K562 (cell line): ENCODE measurements at regions of chr22 and their contacts with region 1.

Region 1: GRCh38 chr22:19844377-19845053 is 10.2 kb downstream of the GNB1L start:
- DNase-seq: peak in 1 of 4 experiments; percentile 28
- ATAC-seq: no peak
- H3K4me3 ChIP-seq: no peak overlapping the region
- H3K27ac ChIP-seq: no peak overlapping the region
- H3K4me1 ChIP-seq: peaks cover 0 to 50% of the 10 kb centered on the region in 2 experiments; a peak in 2 of 5 replicates
- H3K27me3 ChIP-seq: no peaks in the 10 kb centered on the region
- CTCF ChIP-seq: no peak
- EP300 ChIP-seq: no peak
- POLR2A ChIP-seq: no peak
- RAD21 ChIP-seq: no peak

Region 2: DNA sequence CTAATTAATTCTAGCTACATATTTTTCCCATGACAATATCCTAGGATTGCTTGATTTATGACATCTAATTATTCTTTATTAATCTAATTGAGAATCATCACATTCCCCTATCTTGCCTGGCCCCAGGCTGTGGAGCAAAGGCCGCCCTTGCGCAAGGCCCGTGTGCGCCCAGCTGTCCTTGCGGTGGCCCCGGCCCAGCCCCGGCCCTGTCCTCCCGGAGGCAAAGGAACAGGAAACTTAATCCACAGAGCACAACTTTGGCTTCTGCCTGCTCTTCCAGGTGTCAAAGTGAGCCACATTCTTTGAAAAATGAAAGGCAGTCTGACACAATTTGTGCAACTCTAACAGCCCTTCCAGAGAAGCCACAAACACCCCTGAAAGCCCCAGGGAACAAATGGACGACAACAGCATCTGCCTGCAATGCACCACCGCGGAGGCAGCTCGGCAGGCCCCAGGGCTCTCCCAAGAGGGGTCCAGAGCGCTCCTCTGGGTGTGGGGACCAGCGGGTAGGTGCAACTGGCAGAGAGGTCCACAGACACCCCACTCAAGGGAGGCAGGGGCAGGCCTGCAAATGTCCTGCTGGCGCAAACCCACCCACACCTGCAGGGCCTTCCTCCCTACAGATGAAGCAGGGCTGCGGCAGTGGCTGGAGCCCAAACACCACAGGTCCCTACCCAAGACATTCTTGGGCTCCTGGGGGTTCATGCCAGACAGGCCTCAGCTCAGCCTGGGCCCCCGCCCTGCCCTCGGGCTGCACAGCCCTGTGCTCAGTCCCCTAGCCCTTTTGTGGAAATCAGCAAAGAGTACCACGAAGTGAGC is 20.1 kb before region 1 on chr22:
- CTCF ChIA-PET with region 1: no interaction called
- POLR2A ChIA-PET with region 1: interaction called, 247 read pairs
- in situ Hi-C with region 1: no loop called
- intact Hi-C with region 1: no loop called
- DNase-seq: no peak
- ATAC-seq: no peak
- H3K4me3 ChIP-seq: no peak overlapping the region
- H3K27ac ChIP-seq: no peak overlapping the region
- H3K4me1 ChIP-seq: peaks cover 13 to 52% of the 10 kb centered on the region in 2 experiments; a peak in 4 of 5 replicates
- H3K27me3 ChIP-seq: no peaks in the 10 kb centered on the region
- CTCF ChIP-seq: no peak
- EP300 ChIP-seq: no peak
- POLR2A ChIP-seq: no peak
- RAD21 ChIP-seq: no peak

Region 3: GRCh38 chr22:19868773-19869471 is 24.4 kb after region 1 on chr22:
- CTCF ChIA-PET with region 1: no interaction called
- POLR2A ChIA-PET with region 1: interaction called, 51 read pairs
- in situ Hi-C with region 1: no loop called
- intact Hi-C with region 1: no loop called
- DNase-seq: no peak
- ATAC-seq: peak; percentile 2; the same call in 1 of the 3 replicates
- H3K4me3 ChIP-seq: no peak overlapping the region
- H3K27ac ChIP-seq: no peak overlapping the region
- H3K4me1 ChIP-seq: peaks cover 8 to 53% of the 10 kb centered on the region in 2 experiments; a peak in 4 of 5 replicates
- H3K27me3 ChIP-seq: peaks cover 2 to 30% of the 10 kb centered on the region in 2 experiments; a peak in 3 of 5 replicates
- CTCF ChIP-seq: no peak
- EP300 ChIP-seq: no peak
- POLR2A ChIP-seq: no peak
- RAD21 ChIP-seq: no peak

Region 4: GRCh38 chr22:20130739-20131596 is 286.5 kb after region 1 on chr22:
- CTCF ChIA-PET with region 1: no interaction called
- POLR2A ChIA-PET with region 1: no interaction called
- in situ Hi-C with region 1: no loop called
- intact Hi-C with region 1: no loop called
- DNase-seq: peak; percentile 95 to 100 (median 98)
- ATAC-seq: peak; percentile 79
- H3K4me3 ChIP-seq: peak overlapping the region; percentile 62
- H3K27ac ChIP-seq: peak overlapping the region; percentile 20; the same call in 2 of the 3 replicates
- H3K4me1 ChIP-seq: peaks cover 11 to 79% of the 10 kb centered on the region in 2 experiments
- H3K27me3 ChIP-seq: no peaks in the 10 kb centered on the region
- CTCF ChIP-seq: no peak
- EP300 ChIP-seq: no peak
- POLR2A ChIP-seq: no peak
- RAD21 ChIP-seq: no peak

Region 5: DNA sequence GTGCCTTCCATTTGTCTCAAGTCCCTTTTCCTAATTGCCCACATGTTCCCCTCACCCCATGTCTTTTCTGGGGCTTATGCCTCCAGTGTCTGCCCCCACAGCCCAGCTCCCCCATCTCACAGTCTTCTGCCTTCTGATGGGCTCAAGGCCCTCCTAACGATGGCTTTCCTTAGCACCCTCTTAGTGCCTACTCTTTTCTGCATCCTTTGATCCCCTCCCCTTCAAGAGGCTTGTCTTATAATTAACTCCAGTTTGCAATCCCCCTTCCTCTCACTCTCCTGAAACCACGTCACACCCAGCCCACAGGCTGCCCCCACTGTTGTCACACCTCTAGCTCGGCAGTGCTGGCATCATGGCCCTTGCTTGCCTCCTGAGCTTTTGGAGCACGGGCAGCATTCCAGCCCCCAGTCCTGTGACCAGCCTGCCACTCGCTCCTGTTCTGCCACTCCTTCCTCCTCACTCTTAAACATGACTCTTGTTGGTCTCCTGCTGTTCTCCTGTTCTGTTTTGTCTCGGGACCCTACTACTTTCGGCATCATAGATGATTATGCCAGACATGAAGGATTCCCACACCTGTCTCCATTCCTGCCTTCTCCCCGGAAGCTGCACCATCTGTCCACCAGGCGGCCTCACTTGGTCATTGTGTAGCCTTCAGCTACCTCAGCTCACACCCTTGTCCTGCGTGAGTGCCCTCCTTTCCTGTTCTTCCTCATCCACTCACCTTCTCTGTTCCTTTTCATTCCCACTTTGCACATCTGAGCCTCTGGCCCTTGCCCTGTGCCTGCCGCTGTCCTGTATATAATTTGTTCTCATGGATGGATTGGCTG is 1749.1 kb after region 1 on chr22:
- CTCF ChIA-PET with region 1: no interaction called
- POLR2A ChIA-PET with region 1: no interaction called
- in situ Hi-C with region 1: no loop called
- intact Hi-C with region 1: no loop called
- DNase-seq: peak; percentile 87 to 92 (median 88)
- ATAC-seq: peak; percentile 89
- H3K4me3 ChIP-seq: no peak overlapping the region
- H3K27ac ChIP-seq: no peak overlapping the region
- H3K4me1 ChIP-seq: peaks cover 7 to 12% of the 10 kb centered on the region in 2 experiments; a peak in 4 of 5 replicates
- H3K27me3 ChIP-seq: no peaks in the 10 kb centered on the region; a peak in 1 of 5 replicates
- CTCF ChIP-seq: peak; percentile 96 to 100 (median 98)
- EP300 ChIP-seq: 0 out of 2 replicates have a peak, but pooled peaks have one; percentile 7
- POLR2A ChIP-seq: no peak
- RAD21 ChIP-seq: peak; percentile 53 to 97; a peak in 3 of 4 replicates